ENCODE measurements at regions of chr11 and their contacts with region 1.

Region 1: GRCh38 chr11:25734592-25735211 is 597.2 kb upstream of the ANO3 start:
- DNase-seq: peak; percentile 39
- H3K4me3 Mint-ChIP-seq: no peak overlapping the region
- H3K27ac Mint-ChIP-seq: no peak overlapping the region
- H3K4me1 Mint-ChIP-seq: no peaks in the 10 kb centered on the region
- H3K27me3 Mint-ChIP-seq: peaks cover 18% of the 10 kb centered on the region
- CTCF ChIP-seq: peak; percentile 41

Region 2: DNA sequence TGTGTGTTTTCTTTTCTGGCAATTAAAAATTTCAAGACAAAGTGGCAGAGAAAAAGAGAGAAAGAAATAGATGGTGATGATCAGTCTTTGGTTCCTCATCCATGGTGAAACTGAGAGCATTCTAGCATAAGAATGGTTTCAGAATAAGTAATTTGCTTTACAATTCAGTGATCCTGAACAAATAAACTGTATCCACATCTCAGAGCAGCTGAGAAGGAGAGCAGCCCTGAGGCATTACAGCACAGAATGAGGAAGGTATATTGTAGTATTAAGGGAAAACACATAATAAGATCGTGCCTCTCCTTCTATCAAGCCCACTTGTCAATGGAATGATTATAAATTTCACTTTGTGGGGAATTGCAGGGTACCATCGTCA is 1220.5 kb before region 1 on chr11:
- CTCF ChIA-PET with region 1: no interaction called
- POLR2A ChIA-PET with region 1: no interaction called
- intact Hi-C with region 1: loop called (anchors 10 kb)
- DNase-seq: no peak
- H3K4me3 Mint-ChIP-seq: no peak overlapping the region
- H3K27ac Mint-ChIP-seq: no peak overlapping the region
- H3K4me1 Mint-ChIP-seq: no peaks in the 10 kb centered on the region
- H3K27me3 Mint-ChIP-seq: peaks cover 65% of the 10 kb centered on the region
- CTCF ChIP-seq: no peak

Region 3: GRCh38 chr11:24779791-24780190 is 954.9 kb before region 1 on chr11:
- CTCF ChIA-PET with region 1: interaction called, 3 read pairs
- POLR2A ChIA-PET with region 1: no interaction called
- intact Hi-C with region 1: loop called (anchors 2 kb)
- DNase-seq: peak; percentile 12
- H3K4me3 Mint-ChIP-seq: no peak overlapping the region
- H3K27ac Mint-ChIP-seq: no peak overlapping the region
- H3K4me1 Mint-ChIP-seq: no peaks in the 10 kb centered on the region
- H3K27me3 Mint-ChIP-seq: no peaks in the 10 kb centered on the region
- CTCF ChIP-seq: no peak